Panc1 (cell line): ENCODE measurements at regions of chr12 and their contacts with region 1.

Region 1: DNA sequence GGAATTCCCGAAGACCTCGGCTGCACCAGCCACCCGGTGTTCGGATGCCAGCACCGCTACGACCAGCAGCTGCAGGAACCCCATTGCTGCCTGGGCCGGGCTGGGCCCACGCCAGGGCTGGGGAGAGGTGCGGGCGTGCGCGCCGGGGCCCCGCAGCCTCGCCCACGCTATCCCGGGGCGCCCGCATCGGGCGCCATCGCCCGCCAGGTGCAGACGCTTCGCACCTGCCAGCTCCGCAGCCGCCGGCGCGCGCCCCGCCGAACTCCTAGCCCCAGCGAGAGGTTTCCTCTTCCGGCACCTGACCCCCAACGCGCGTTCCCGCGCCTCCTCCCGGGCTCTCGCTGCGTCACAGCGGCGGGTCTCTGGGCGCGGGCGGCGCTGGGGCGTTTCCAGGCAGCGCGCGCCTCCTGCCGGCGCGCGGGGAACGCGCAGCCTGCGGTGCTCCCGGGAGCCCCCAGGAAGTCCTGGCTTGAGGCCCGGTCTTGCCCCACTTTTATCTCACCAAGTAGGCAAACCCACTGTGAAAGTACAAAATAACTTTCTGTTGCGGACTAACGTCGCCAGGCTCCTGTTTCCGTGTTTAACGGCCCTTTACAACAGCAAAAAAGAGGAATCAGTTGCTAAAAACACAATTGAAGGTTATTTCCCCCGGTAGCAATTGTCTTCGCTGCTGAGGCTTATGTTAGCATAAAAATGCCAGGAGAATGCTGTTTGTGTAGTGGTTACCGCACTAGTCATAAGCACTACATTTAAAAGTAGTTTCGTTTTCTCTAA is at the start of gene TM7SF3:
- DNase-seq: peak; percentile 74
- ATAC-seq: peak; percentile 98
- H3K4me3 ChIP-seq: peak within 1 kb of the TSS; percentile 81 to 96
- H3K27ac ChIP-seq: peak within 1 kb of the TSS; percentile 88
- H3K4me1 ChIP-seq: peaks cover 25% of the 10 kb centered on the region
- H3K27me3 ChIP-seq: no peaks in the 10 kb centered on the region
- CTCF ChIP-seq: peak; percentile 100
- total RNA-seq, gene TM7SF3: 59.8 TPM

Region 2: GRCh38 chr12:26810330-26810729 is 203.9 kb before region 1 on chr12:
- CTCF ChIA-PET with region 1: no interaction called
- POLR2A ChIA-PET with region 1: no interaction called
- in situ Hi-C with region 1: no loop called
- intact Hi-C with region 1: no loop called
- DNase-seq: no peak
- ATAC-seq: no peak
- H3K4me3 ChIP-seq: no peak overlapping the region
- H3K27ac ChIP-seq: no peak overlapping the region
- H3K4me1 ChIP-seq: no peaks in the 10 kb centered on the region; the same call in 1 of the 2 replicates
- H3K27me3 ChIP-seq: no peaks in the 10 kb centered on the region
- CTCF ChIP-seq: no peak

Region 3: DNA sequence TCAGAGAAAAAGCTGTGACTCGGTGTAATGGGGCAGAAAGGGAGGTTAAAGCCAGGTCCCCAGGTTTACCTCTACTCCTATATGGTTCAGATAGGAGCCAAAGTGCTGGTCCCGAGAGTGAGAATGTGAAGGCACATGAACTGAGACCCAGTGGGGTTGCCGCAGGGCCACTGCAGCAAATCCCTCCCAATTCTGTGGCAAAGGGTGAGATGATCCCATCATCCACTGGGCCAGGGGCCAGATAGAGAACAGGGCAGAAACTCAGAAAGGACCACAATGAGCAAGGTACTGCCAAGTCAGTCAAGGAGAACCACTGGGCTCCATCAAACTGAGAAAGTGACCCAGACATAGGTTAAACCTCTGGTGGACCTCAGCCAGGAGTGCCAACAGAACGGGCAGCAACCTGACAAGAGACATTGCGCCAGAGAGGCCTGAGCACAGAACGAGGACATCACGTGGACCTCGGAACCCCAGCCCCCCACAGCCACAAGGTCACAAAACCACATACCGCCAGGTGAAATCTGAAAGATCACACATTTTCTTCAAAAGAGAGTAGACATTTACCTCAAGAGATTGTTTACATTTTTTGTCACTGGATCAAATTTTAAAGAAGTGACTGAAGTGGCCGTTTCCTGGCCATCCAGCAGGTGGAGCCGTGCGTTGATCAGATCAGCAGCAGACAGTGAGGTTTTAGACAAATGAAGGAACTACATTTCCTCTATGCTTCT is 160.8 kb before region 1 on chr12:
- CTCF ChIA-PET with region 1: no interaction called
- POLR2A ChIA-PET with region 1: no interaction called
- in situ Hi-C with region 1: no loop called
- intact Hi-C with region 1: loop called (anchors 5 kb)
- DNase-seq: no peak
- ATAC-seq: peak; percentile 95
- H3K4me3 ChIP-seq: 0 out of 4 replicates have a peak overlapping the region, but pooled peaks of 1 of the 2 experiments have one; percentile 12
- H3K27ac ChIP-seq: no peak overlapping the region
- H3K4me1 ChIP-seq: peaks cover 3% of the 10 kb centered on the region; the same call in 1 of the 2 replicates
- H3K27me3 ChIP-seq: no peaks in the 10 kb centered on the region; the same call in 1 of the 2 replicates
- CTCF ChIP-seq: peak; percentile 97

Region 4: GRCh38 chr12:26937875-26938700 is 76.2 kb before region 1 on chr12 and contains the starts of genes FGFR1OP2 and INTS13:
- CTCF ChIA-PET with region 1: interaction called, 3 read pairs
- POLR2A ChIA-PET with region 1: no interaction called
- in situ Hi-C with region 1: no loop called
- intact Hi-C with region 1: loop called (anchors 5 kb)
- DNase-seq: peak; percentile 98
- ATAC-seq: peak; percentile 98
- H3K4me3 ChIP-seq: peak within 1 kb of the TSS; percentile 98
- H3K27ac ChIP-seq: peak within 1 kb of the TSS; percentile 98
- H3K4me1 ChIP-seq: peaks cover 40% of the 10 kb centered on the region
- H3K27me3 ChIP-seq: no peaks in the 10 kb centered on the region
- CTCF ChIP-seq: no peak
- total RNA-seq, gene FGFR1OP2: 60.1 TPM
- total RNA-seq, gene INTS13: 55.9 TPM

Region 5: DNA sequence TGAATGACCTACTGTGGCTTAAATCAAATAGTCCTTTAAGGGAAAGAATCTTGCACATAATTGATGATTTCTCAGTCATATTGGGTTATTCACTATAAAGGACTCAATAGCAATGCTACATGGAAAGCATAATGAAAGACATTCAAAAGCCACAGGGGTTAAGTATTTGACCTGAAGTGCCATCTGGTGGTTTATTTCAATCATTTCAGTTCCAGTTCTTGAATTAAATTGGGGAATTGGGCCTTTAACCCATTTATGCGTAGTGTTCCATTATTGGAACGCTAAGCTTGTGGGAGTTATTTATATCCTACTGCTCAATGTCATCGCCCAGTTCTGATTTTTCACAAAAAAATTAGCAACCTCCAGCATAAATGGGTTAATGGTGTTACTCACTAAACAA is 109.4 kb after region 1 on chr12:
- CTCF ChIA-PET with region 1: interaction called, 7 read pairs
- POLR2A ChIA-PET with region 1: no interaction called
- in situ Hi-C with region 1: no loop called
- intact Hi-C with region 1: loop called (anchors 10 kb)
- DNase-seq: no peak
- ATAC-seq: no peak
- H3K4me3 ChIP-seq: no peak overlapping the region
- H3K27ac ChIP-seq: no peak overlapping the region
- H3K4me1 ChIP-seq: no peaks in the 10 kb centered on the region
- H3K27me3 ChIP-seq: peaks cover 6% of the 10 kb centered on the region; the same call in 1 of the 2 replicates
- CTCF ChIP-seq: peak; percentile 48; the same call in 1 of the 2 replicates

Region 6: DNA sequence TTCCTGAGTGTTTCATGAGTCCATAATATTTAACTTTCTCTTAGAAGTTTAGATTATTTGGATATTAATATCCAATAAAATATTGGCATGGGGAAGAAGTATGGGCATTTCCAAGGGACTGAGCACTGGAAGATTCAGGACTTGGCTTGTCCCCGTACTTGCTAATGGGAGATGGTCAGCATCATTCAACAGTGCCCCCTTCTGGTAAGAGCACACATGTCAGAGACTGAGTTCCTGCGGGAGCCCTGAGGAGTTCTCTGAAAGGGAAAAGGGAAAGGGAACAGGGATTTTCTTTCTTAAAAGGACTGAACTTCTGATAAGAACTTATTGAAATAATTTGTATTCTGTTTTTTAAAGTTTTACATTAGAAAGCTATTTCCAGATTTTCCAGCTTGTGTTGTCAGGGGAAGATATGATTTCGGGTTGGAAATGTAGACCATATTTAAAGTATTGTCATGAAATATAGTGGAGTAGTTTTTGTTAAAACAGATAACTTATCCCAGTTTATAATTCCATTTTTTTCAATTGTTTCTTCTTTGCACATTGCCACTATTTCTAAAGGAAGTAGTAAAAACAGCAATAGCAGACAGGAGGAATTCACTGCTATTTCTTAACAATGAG is 127.9 kb after region 1 on chr12:
- CTCF ChIA-PET with region 1: interaction called, 15 read pairs
- POLR2A ChIA-PET with region 1: no interaction called
- in situ Hi-C with region 1: no loop called
- intact Hi-C with region 1: no loop called
- DNase-seq: peak; percentile 81
- ATAC-seq: peak; percentile 100
- H3K4me3 ChIP-seq: no peak overlapping the region
- H3K27ac ChIP-seq: no peak overlapping the region
- H3K4me1 ChIP-seq: no peaks in the 10 kb centered on the region
- H3K27me3 ChIP-seq: no peaks in the 10 kb centered on the region
- CTCF ChIP-seq: peak; percentile 96

Region 7: DNA sequence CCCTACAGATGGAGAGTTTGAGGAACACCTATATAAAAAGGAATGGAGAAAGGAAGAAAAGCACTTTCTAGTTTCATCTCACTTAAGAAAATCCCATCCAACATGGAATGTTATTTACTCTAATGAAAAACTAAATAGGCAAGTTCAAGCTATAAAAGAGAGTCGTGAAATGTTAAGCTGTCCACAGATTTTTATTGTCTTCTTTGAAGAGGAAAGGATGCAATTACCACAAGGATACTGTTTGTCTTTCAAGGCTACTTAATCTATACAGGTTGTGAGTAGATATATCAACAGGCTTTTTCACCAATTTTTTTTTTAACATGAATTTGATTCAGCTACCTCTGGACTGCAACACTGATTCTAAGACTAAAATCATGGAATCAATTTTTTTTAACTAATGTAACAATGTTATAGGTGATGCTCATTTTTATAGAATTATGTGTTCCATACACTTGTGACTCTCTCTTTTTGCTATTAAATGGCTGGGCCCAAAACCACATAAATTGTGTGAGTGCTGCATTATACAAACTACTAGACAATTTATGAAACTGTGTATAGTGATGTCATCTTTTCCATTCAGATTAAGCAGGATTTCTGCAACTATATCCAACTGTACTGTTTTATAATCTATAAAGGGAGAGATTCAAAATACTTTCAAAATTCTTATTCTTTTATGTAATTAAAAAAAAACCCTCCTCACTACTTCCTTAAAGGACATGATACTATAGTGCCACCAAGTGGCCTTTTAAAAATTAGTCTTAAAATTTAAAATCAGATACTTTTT is 291.6 kb after region 1 on chr12:
- CTCF ChIA-PET with region 1: interaction called, 42 read pairs
- POLR2A ChIA-PET with region 1: interaction called, 4 read pairs
- in situ Hi-C with region 1: no loop called
- intact Hi-C with region 1: loop called (anchors 5 kb)
- DNase-seq: no peak
- ATAC-seq: no peak
- H3K4me3 ChIP-seq: no peak overlapping the region
- H3K27ac ChIP-seq: no peak overlapping the region
- H3K4me1 ChIP-seq: no peaks in the 10 kb centered on the region
- H3K27me3 ChIP-seq: no peaks in the 10 kb centered on the region
- CTCF ChIP-seq: peak; percentile 56; the same call in 1 of the 2 replicates

Region 8: GRCh38 chr12:28135801-28136439 is 1121.6 kb after region 1 on chr12:
- CTCF ChIA-PET with region 1: no interaction called
- POLR2A ChIA-PET with region 1: interaction called, 12 read pairs
- in situ Hi-C with region 1: no loop called
- intact Hi-C with region 1: no loop called
- DNase-seq: no peak
- ATAC-seq: no peak
- H3K4me3 ChIP-seq: no peak overlapping the region
- H3K27ac ChIP-seq: no peak overlapping the region
- H3K4me1 ChIP-seq: peaks cover 14% of the 10 kb centered on the region
- H3K27me3 ChIP-seq: no peaks in the 10 kb centered on the region
- CTCF ChIP-seq: no peak